ENCODE measurements at regions of chr1 and their contacts with region 1.

Region 1: DNA sequence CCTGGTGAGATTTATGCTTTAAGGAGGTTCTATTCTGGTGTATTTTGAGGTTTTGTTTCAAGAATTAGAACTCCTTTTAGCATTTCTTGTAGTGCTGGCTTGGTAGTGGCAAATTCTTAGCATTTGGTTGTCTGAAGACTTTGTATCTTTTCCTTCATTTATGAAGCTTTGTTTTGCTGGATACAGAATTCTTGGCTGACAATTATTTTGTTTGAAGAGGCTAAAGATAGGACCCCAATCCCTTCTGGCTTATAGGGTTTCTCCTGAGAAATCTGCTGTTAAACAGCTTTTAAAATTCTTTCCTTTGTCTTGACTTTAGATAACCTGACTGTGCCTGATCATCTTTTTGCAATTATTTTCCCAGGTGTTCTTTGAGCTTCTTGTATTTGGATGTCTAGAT is 58.6 kb downstream of the GPR137B start:
- DNase-seq: no peak
- H3K4me3 ChIP-seq: no peak overlapping the region
- H3K27ac ChIP-seq: no peak overlapping the region
- H3K4me1 ChIP-seq: no peaks in the 10 kb centered on the region
- H3K27me3 ChIP-seq: no peaks in the 10 kb centered on the region
- CTCF ChIP-seq: no peak
- POLR2A ChIP-seq: no peak

Region 2: DNA sequence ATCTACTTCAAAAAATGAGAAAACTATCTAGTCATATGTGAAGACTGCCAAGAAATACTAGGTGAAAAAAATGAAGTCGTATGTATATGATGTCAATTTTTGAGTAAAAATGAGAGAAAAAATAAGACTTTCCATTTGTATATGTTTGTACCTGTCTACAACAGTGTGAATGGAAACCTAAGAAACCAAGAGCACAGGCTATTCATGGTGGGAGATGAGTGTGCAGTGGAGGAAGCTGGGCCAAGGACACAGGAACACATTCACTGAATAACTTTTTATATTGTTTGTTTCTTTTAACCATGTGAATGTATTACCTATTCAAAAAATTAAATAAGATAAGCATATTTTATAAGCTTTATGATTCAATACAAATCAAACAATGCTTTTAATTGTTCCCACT is 13.8 kb after region 1 on chr1:
- intact Hi-C with region 1: loop called (anchors 1 kb)
- DNase-seq: no peak
- H3K4me3 ChIP-seq: no peak overlapping the region
- H3K27ac ChIP-seq: no peak overlapping the region
- H3K4me1 ChIP-seq: no peaks in the 10 kb centered on the region
- H3K27me3 ChIP-seq: no peaks in the 10 kb centered on the region
- CTCF ChIP-seq: no peak
- POLR2A ChIP-seq: no peak

Measured in vagina (tissue), 2 donors.